ENCODE measurements at regions of chr20 and their contacts with region 1.

Region 1: GRCh38 chr20:24501764-24502556 is 32.5 kb downstream of the SYNDIG1 start:
- DNase-seq: no peak

Region 2: GRCh38 chr20:24469116-24469893 is 32.7 kb before region 1 on chr20 and contains the start of gene SYNDIG1:
- intact Hi-C with region 1: loop called (anchors 2 kb)
- DNase-seq: peak; percentile 75
- total RNA-seq, gene SYNDIG1: 17.6 TPM

Region 3: GRCh38 chr20:24619212-24619611 is 117.3 kb after region 1 on chr20:
- intact Hi-C with region 1: loop called (anchors 10 kb)
- DNase-seq: no peak

Region 4: DNA sequence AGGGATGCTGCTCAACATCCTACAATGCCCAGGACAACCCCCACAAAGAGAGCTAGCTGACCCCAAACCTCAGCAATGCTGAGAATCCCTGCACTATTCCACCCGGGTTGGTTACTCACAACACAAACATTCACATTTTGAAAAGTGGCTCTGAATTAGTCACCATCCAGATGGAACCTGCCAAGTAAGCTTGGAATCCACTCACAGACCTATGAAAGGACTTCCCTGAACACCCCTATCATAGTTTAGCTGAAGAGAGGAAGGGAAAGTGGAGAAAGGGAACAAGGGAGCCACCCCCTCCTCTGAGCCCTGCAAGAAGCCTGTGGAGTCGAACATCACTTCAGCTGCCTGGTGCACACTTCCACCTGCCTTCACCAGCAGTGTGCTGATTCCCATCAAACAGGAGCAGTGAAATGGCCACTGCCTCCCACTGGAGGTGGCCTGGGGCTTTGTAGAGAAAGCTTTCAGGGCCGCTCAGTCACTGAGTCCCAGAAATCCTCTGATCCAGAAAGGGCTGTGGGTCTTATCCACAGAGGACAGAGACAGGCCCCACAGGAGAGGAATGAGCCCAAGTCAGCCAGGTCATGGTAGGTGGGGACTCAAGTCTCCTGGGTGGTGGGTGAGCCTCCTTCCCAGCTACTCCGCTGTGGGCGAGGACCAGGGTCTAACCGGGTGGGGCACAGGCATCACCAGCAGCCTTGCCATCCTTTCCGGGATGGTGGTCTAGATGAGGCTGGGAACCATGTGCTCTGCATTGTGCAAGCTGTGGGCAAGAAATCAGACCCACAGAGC is 171.1 kb after region 1 on chr20:
- intact Hi-C with region 1: no loop called
- DNase-seq: peak; percentile 46

Region 5: GRCh38 chr20:24773751-24774201 is 271.8 kb after region 1 on chr20:
- intact Hi-C with region 1: loop called (anchors 10 kb)
- DNase-seq: no peak